ENCODE measurements at regions of chr5 and their contacts with region 1.

Region 1: DNA sequence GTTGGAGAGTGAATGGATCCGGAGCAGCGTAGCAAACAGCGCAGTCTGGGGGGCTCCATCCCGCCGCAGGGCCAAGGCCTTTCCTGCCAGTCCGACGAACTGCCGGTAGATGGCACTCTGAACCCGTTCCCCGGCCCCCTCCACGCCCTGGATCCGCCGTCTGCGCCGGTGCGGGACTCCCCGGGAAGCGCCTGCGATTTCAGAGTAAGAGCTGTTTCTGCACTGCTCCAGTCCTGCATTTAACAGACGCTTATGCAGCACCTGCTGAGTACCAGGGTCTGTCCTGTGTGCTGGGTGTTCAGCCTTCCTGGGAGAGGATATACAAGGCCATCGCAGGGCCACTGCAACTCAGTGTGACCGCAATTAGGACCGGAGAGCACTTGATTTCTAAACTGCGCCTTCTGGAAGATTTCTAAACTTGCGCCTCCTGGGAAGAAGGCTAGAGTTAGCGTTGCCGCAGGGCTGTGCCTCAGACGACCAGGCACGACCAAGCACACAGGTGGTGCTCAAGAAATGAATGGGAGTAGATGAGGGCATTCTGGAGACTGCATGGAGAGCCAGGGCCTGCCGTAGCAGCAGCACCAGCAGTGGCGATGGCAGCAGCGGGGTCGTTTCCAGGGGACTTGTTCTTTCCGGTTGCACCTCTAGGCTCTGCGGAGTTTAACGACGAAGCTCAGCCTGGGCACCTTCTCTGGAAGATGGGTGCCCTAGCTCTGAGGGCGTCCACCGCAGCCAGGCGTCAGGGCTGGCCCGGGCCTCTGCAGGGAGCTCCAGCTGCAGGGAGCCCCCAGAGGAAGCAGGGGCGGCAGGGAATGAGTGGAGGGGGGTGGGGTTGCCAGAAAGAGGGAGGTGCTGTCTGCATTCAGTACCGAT is 14.3 kb upstream of the TIFAB start:
- DNase-seq: peak; percentile 85
- H3K4me3 Mint-ChIP-seq: peak overlapping the region; percentile 49
- H3K27ac Mint-ChIP-seq: no peak overlapping the region
- H3K4me1 Mint-ChIP-seq: peaks cover 6% of the 10 kb centered on the region
- H3K27me3 Mint-ChIP-seq: peaks cover 28% of the 10 kb centered on the region

Region 2: DNA sequence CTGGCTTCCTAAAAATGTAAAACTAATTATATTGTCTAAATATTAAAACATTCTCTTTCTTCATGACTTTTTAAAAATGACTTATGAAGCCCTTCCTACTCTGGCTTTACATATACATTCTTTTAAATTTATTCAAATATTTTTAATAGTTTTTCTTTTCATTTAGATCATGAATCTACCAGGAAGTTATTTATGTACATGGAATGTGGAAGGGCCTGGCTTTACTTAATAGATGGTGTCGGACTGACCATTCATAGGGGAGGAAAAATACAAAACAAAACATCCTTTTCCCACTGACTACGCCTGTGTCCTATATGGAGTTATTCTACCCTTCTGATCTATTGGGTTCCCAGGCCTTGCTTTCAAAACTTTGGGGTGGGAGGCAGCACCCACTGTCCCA is 197.2 kb before region 1 on chr5:
- CTCF ChIA-PET with region 1: no interaction called
- intact Hi-C with region 1: no loop called
- DNase-seq: no peak
- H3K4me3 Mint-ChIP-seq: no peak overlapping the region
- H3K27ac Mint-ChIP-seq: no peak overlapping the region
- H3K4me1 Mint-ChIP-seq: no peaks in the 10 kb centered on the region
- H3K27me3 Mint-ChIP-seq: no peaks in the 10 kb centered on the region

Region 3: DNA sequence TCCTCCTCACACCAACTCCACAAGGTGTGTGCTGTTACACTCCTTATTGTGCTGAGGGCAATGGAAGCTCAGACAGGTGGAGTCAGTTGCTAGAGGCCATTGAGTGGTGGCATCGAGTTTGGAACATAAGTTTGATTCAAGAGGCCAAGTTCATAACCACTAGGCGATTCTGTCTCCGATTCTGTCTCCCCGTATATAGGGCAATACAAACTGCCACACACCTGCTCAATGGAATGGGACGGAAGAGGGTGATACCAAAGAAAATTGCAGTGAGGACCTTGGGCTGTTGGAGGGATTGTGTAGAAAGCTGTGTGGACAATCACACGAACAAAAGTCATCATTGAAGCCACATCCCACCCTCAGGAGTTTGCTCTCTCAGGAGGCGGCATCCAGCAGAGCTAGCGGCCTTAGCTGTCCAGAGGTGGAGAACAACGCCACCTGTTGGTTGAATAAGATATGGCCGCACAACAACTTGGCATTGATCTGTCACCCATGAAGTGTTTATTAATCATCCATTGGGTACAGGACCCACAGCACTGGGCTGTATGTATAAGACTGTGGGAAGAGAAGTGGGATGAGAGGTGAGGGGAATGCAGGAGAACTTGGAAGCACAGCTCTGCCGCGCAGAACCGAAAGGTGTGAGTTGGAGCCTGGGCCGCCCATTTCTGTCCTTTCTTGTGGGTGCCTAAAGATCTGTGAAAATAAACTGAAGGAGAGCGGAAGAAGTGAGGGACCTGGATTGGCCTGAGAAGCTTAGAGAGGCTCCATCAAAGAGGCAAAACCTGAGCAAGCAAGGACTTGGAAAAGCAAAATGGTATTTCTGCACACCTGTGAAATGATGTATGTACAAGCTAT is 85.4 kb after region 1 on chr5:
- CTCF ChIA-PET with region 1: interaction called, 438 read pairs
- intact Hi-C with region 1: loop called (anchors 1 kb)
- DNase-seq: peak; percentile 82
- H3K4me3 Mint-ChIP-seq: no peak overlapping the region
- H3K27ac Mint-ChIP-seq: no peak overlapping the region
- H3K4me1 Mint-ChIP-seq: no peaks in the 10 kb centered on the region
- H3K27me3 Mint-ChIP-seq: peaks cover 45% of the 10 kb centered on the region

Region 4: GRCh38 chr5:135829681-135830383 is 363.4 kb after region 1 on chr5:
- CTCF ChIA-PET with region 1: interaction called, 3 read pairs
- intact Hi-C with region 1: loop called (anchors 2 kb)
- DNase-seq: peak; percentile 62
- H3K4me3 Mint-ChIP-seq: no peak overlapping the region
- H3K27ac Mint-ChIP-seq: no peak overlapping the region
- H3K4me1 Mint-ChIP-seq: peaks cover 4% of the 10 kb centered on the region
- H3K27me3 Mint-ChIP-seq: peaks cover 43% of the 10 kb centered on the region

Measured in activated naive CD4-positive, alpha-beta T cell treated with anti-CD3 and anti-CD28 coated beads for 36 hours (primary cell).